Heart right ventricle (tissue), 16 donors: ENCODE measurements at regions of chr7 and their contacts with region 1.

Region 1: DNA sequence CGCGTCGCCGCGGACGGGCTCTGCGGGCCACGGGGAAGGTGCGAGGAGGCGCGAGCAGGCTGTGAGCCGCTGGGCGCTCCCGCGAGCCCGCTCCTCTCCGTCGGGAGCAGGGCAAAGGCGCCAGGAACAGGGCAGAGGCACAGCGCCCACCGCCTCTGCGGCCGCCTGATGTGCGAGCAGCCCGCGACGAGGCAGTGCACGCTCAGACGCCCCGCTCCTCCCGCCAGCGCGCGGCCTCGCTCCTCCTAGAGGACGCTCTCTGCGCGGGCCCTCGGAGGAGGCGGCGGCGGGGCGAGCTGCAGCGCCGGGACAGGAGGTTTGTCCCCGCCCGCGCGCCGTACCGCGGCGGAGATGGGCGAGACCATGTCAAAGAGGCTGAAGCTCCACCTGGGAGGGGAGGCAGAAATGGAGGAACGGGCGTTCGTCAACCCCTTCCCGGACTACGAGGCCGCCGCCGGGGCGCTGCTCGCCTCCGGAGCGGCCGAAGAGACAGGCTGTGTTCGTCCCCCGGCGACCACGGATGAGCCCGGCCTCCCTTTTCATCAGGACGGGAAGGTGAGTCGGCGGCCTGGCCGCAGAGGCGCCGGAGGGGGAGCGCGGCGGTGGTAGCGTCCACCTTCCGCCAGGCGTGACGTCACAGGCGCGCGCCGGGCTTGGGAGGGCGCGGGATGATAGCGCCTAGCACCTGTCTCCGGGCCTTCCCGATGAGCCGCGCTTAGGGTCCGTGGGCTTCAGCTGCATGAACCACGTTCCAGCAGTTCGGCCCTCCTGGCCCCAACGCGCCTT is 731 bp downstream of the LANCL2 start:
- DNase-seq: peak; percentile 94 to 96
- ATAC-seq: peak; percentile 98 to 100 (median 99)
- H3K4me3 ChIP-seq: peak overlapping the region; percentile 78 to 99 (median 93)
- H3K27ac ChIP-seq: peak overlapping the region; percentile 98 to 100 (median 100)
- H3K4me1 ChIP-seq: peaks cover 4 to 27% (median 22%) of the 10 kb centered on the region in 9 donors
- H3K27me3 ChIP-seq: no peaks in the 10 kb centered on the region
- CTCF ChIP-seq: peak in 5 of 9 donors; percentile 36 to 58 (median 52)

Region 2: GRCh38 chr7:54773472-54774399 is 592.1 kb before region 1 on chr7:
- intact Hi-C with region 1: loop called in 1 of 10 experiments (anchors 10 kb)
- DNase-seq: peak; percentile 79 to 80
- ATAC-seq: peak; percentile 68 to 96 (median 92)
- H3K4me3 ChIP-seq: peak overlapping the region in 9 of 10 donors; percentile 5 to 52 (median 41)
- H3K27ac ChIP-seq: no peak overlapping the region
- H3K4me1 ChIP-seq: peaks cover 0 to 8% (median 0%) of the 10 kb centered on the region in 9 donors
- H3K27me3 ChIP-seq: peaks cover 0 to 38% (median 21%) of the 10 kb centered on the region in 7 donors
- CTCF ChIP-seq: peak; percentile 73 to 91 (median 83)

Region 3: DNA sequence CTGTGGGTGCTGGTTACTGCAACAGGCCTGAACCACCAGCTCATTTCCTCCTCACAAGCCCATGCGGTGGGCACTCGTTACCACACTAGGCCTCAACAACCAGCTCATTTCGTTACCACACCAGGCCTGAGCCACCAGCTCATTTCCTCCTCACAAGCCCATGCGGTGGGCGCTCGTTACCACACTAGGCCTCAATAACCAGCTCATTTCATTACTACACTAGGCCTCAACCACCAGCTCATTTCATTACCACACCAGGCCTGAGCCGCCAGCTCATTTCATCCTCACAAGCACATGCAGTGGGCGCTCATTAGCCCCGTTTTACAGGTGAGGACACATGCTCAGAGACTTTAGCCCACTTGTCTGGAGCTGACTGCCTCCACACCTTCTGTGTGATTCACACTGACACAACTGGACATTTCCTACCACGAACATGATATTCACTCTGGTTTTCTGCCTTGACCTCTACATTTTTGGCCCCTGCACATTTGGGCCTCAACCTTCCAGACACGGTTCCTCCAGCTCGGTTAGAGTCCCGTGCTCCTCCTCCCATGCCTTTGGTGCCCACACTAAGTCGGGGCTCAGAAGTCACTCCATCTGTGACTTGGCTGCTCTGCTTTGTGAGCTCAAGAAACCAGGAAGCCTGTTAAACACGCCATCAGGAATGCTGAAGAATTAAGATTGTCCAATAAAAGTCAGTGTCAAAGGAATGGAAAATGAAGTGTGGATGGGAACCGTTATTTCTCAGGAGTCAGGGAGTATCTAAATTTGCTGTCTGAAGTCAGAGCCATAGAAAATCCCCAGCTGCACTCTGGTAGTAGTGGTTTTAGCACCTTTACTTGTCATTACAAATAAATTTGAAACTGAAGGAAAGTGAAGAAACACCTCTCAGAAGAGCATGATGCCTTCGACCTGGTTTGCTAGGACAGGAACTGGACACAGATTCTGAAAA is 56.6 kb before region 1 on chr7:
- intact Hi-C with region 1: loop called in 1 of 10 experiments (anchors 10 kb)
- DNase-seq: peak in 1 of 2 donors; percentile 16
- ATAC-seq: peak in 1 of 8 donors; percentile 28
- H3K4me3 ChIP-seq: no peak overlapping the region
- H3K27ac ChIP-seq: peak overlapping the region in 1 of 10 donors; percentile 44
- H3K4me1 ChIP-seq: peaks cover 0 to 36% (median 16%) of the 10 kb centered on the region in 9 donors
- H3K27me3 ChIP-seq: no peaks in the 10 kb centered on the region
- CTCF ChIP-seq: no peak

Region 4: GRCh38 chr7:55887821-55888247 is 522.0 kb after region 1 on chr7:
- intact Hi-C with region 1: loop called in 1 of 10 experiments (anchors 10 kb)
- DNase-seq: no peak
- ATAC-seq: no peak
- H3K4me3 ChIP-seq: peak overlapping the region; percentile 25 to 66 (median 54)
- H3K27ac ChIP-seq: peak overlapping the region in 9 of 10 donors; percentile 37 to 81 (median 69)
- H3K4me1 ChIP-seq: peaks cover 0 to 12% (median 0%) of the 10 kb centered on the region in 9 donors
- H3K27me3 ChIP-seq: no peaks in the 10 kb centered on the region
- CTCF ChIP-seq: no peak